Activated CD4-positive, alpha-beta T cell treated with anti-CD3 and anti-CD28 coated beads, Interleukin-2, amount 10 ng/mL, durations not matched to agents 24 days and 14 days (primary cell): ENCODE measurements at regions of chr6 and their contacts with region 1.

Region 1: GRCh38 chr6:129936329-129937165 is 75.4 kb upstream of the TMEM244 start:
- DNase-seq: peak; percentile 78
- H3K4me3 Mint-ChIP-seq: no peak overlapping the region
- H3K27ac Mint-ChIP-seq: no peak overlapping the region
- H3K4me1 Mint-ChIP-seq: no peaks in the 10 kb centered on the region
- H3K27me3 Mint-ChIP-seq: peaks cover 30% of the 10 kb centered on the region

Region 2: DNA sequence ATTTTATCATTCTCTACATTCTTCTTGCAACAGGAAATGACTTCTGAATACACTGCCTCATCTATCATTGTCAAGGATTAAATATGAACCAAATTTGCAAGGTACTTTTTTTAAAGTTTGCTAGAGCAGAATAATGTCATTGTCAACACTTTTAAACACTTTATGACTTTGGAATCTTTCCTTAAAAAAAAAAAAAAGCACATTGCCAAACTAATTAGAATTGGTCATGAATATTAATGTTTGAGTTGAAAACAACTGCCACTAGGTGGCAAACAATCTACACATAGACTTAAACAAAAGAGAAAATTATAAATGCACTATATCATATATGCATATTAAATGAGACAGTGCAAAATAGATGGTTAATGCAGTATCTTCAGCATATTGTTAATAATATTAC is 42.9 kb before region 1 on chr6:
- intact Hi-C with region 1: loop called (anchors 5 kb)
- DNase-seq: no peak
- H3K4me3 Mint-ChIP-seq: no peak overlapping the region
- H3K27ac Mint-ChIP-seq: no peak overlapping the region
- H3K4me1 Mint-ChIP-seq: peaks cover 5% of the 10 kb centered on the region
- H3K27me3 Mint-ChIP-seq: peaks cover 3% of the 10 kb centered on the region

Region 3: GRCh38 chr6:130093546-130093945 is 157.0 kb after region 1 on chr6:
- intact Hi-C with region 1: no loop called
- DNase-seq: no peak
- H3K4me3 Mint-ChIP-seq: no peak overlapping the region
- H3K27ac Mint-ChIP-seq: no peak overlapping the region
- H3K4me1 Mint-ChIP-seq: peaks cover 8% of the 10 kb centered on the region
- H3K27me3 Mint-ChIP-seq: no peaks in the 10 kb centered on the region